Thyroid gland (tissue), 4 donors: ENCODE measurements at regions of chr10 and their contacts with region 1.

Region 1: GRCh38 chr10:71319042-71319799 is at the start of gene SLC29A3:
- DNase-seq: peak; percentile 85
- H3K4me3 ChIP-seq: peak within 1 kb of the TSS; percentile 67 to 70 (median 69)
- H3K27ac ChIP-seq: peak within 1 kb of the TSS; percentile 77 to 80 (median 78)
- H3K4me1 ChIP-seq: peaks cover 14 to 32% of the 10 kb centered on the region in 2 donors
- H3K27me3 ChIP-seq: no peaks in the 10 kb centered on the region
- CTCF ChIP-seq: peak; percentile 20 to 79 (median 68)
- POLR2A ChIP-seq: peak in 1 of 2 donors; percentile 76
- total RNA-seq, gene SLC29A3: 5.1 to 8.2 (median 6.7) TPM

Region 2: GRCh38 chr10:71396084-71396720 is 77.0 kb after region 1 on chr10:
- intact Hi-C with region 1: no loop called
- DNase-seq: peak; percentile 47 to 56
- H3K4me3 ChIP-seq: peak overlapping the region in 1 of 3 donors; percentile 40
- H3K27ac ChIP-seq: no peak overlapping the region
- H3K4me1 ChIP-seq: peaks cover 11 to 14% of the 10 kb centered on the region in 2 donors
- H3K27me3 ChIP-seq: peaks cover 15% of the 10 kb centered on the region
- CTCF ChIP-seq: peak in 4 of 6 experiments; percentile 27 to 46 (median 36)
- POLR2A ChIP-seq: no peak

Region 3: GRCh38 chr10:71569775-71570588 is 250.8 kb after region 1 on chr10:
- intact Hi-C with region 1: loop called (anchors 5 kb)
- DNase-seq: peak; percentile 70 to 78
- H3K4me3 ChIP-seq: no peak overlapping the region
- H3K27ac ChIP-seq: no peak overlapping the region
- H3K4me1 ChIP-seq: no peaks in the 10 kb centered on the region
- H3K27me3 ChIP-seq: no peaks in the 10 kb centered on the region
- CTCF ChIP-seq: peak; percentile 75 to 82 (median 78)
- POLR2A ChIP-seq: no peak

Region 4: DNA sequence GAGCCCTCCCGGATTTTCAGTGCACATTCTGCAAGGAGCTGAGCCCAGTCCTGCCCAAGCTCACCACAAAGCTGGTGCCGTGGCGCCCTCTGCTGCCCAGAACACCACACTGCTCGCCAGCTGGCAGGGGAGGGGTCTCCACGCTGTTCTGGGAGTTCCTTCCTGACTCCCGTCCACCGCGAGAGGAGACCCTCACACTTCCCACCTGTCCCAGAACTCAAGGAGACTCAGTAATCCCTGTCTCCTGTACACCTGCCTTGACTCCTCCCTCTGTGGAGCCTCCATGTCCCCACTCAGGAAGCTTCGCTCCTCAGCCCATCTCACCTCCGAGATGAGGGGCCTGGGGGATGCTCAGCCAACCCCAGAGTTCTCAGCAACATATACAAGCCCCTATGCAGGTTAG is 389.1 kb after region 1 on chr10:
- intact Hi-C with region 1: loop called (anchors 5 kb)
- DNase-seq: peak; percentile 48 to 52
- H3K4me3 ChIP-seq: no peak overlapping the region
- H3K27ac ChIP-seq: no peak overlapping the region
- H3K4me1 ChIP-seq: peaks cover 3 to 8% of the 10 kb centered on the region in 2 donors
- H3K27me3 ChIP-seq: no peaks in the 10 kb centered on the region
- CTCF ChIP-seq: peak; percentile 48 to 92 (median 74)
- POLR2A ChIP-seq: no peak

Region 5: GRCh38 chr10:71812016-71812912 is 493.0 kb after region 1 on chr10:
- intact Hi-C with region 1: loop called (anchors 5 kb)
- DNase-seq: peak; percentile 79 to 84
- H3K4me3 ChIP-seq: no peak overlapping the region
- H3K27ac ChIP-seq: peak overlapping the region in 2 of 3 donors; percentile 13 to 26
- H3K4me1 ChIP-seq: peaks cover 0 to 14% of the 10 kb centered on the region in 2 donors
- H3K27me3 ChIP-seq: no peaks in the 10 kb centered on the region
- CTCF ChIP-seq: peak; percentile 38 to 74 (median 64)
- POLR2A ChIP-seq: no peak